ENCODE measurements at regions of chr4 and their contacts with region 1.

Region 1: DNA sequence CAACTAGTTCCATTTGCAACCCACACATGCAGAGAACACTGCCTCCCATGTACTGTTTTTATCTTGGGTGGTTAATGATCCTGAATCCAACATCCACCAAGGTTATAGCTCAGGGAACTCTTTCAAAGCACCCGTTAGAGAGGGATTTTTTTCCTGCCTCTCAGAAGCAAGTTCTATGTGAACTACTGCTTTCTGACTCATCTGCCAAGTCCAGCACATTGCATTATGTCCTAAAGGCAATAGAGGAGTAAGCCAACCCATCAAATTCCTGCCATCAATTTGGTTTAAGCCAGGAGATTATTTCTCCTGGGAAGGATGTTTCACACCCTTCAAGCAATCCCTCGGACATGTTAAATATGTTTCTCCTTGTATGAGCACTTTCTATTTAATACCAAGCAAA is 334.5 kb downstream of the GASK1B start:
- DNase-seq: no peak
- H3K4me3 ChIP-seq: no peak overlapping the region
- H3K27ac ChIP-seq: peak overlapping the region in 3 of 59 donors; percentile 9 to 59 (median 28)
- H3K27me3 ChIP-seq: no peaks in the 10 kb centered on the region
- CTCF ChIP-seq: no peak

Region 2: DNA sequence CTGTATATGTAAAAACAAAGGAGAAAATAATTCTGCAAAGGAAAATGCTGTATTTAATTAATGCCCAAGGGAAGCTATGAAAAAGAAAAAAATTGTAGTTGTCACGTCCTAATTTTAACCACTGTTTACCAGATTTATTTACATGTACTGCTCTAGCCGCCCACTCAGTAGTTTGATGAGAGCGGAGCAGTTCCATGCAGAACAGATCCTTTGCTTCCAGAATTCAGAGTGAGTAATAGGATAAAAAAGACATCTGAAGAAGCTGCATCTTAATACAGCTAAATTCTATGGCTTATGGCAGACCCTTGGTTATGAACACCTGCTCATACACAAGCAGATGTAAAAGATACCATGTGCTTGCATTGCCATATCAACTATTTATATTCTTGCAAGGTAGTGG is 47.4 kb after region 1 on chr4:
- intact Hi-C with region 1: loop called in 1 of 2 experiments (anchors 5 kb)
- DNase-seq: peak in 1 of 10 donors; percentile 9
- H3K4me3 ChIP-seq: no peak overlapping the region
- H3K27ac ChIP-seq: peak overlapping the region in 31 of 59 donors; percentile 14 to 78 (median 48)
- H3K27me3 ChIP-seq: no peaks in the 10 kb centered on the region
- CTCF ChIP-seq: no peak

Region 3: GRCh38 chr4:158094413-158095134 is 256.2 kb after region 1 on chr4:
- intact Hi-C with region 1: no loop called
- DNase-seq: no peak
- H3K4me3 ChIP-seq: no peak overlapping the region
- H3K27ac ChIP-seq: no peak overlapping the region
- H3K27me3 ChIP-seq: no peaks in the 10 kb centered on the region
- CTCF ChIP-seq: no peak